ENCODE measurements at regions of chr12 and their contacts with region 1.

Region 1: GRCh38 chr12:4193821-4194220 is 79.7 kb upstream of the CCND2 start:
- DNase-seq: no peak
- ATAC-seq: no peak

Region 2: DNA sequence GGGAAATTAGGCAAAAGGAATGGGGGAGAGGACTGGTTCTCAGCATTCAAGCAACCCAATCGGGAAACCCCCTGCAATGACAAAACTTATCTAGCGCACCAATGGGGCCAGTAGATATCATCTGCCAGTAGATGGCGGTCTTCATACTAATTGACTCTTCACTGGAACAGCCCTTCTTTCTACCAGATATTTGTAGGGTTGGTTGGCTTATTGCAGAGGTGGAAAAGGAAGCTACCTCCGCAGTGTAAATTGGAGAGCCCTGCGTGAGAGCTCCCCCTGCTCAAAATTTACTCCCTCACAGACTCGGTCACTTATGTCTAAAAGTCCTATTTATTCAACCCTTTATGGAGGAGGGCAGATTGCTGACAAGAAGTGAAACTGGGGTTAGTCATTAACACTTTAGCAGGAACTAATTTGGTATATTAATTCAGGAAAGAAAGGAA is 86.4 kb before region 1 on chr12:
- intact Hi-C with region 1: no loop called
- DNase-seq: no peak
- ATAC-seq: peak; percentile 91

Region 3: GRCh38 chr12:4230526-4230925 is 36.7 kb after region 1 on chr12:
- intact Hi-C with region 1: loop called (anchors 2 kb)
- DNase-seq: no peak
- ATAC-seq: no peak